ENCODE measurements at regions of chr11 and their contacts with region 1.

Region 1: DNA sequence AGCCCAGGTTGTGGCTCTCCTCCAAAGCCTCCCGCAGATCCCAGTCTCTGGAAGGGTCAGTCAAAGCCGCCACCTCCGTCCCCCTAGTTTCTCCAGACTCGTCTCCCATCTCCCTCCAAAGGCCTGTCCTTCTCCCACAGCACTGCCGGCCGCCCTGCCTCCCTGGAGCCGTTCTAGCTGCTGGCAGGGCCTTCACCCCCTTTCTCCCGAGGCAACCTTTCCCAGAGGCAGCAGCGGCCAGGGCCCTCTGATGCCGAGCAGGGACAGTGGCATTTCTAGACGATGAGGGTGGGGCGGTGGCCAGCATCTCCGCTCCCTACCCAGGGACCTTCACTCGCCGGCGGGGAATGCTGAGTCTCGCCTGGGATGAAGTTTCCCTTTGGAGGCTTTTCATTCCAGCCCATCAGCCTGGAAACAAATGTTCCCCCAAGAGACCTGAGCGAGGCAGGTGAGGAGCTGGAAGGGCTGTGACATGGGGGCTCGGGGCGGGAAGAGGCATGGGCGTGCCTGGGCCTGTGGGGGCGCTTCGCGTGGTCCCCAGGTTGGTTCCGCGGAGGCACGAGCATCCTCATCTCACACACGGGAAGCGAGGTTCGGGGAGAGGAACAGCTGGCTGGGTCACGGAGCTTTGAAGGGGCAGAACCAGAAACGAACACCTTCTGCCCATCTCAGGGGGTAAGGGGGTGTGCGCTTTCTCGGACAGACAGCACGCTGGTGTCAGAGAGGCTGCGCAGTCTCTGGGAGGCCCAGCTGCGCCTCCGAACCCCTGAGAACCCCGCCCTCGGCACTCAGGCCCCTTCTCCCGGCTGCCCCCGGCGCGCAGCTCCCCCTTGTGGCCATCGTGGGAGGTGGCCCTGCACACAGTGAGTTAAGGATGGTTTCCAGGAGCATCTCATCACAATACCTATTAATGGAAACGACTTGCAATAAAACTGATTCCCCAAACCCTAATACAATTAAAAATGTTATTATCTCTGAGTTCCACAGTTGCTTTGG is 18.1 kb upstream of the KLHL35 start:
- DNase-seq: peak; percentile 59
- H3K4me3 Mint-ChIP-seq: no peak overlapping the region
- H3K27ac Mint-ChIP-seq: no peak overlapping the region
- H3K4me1 Mint-ChIP-seq: no peaks in the 10 kb centered on the region
- H3K27me3 Mint-ChIP-seq: no peaks in the 10 kb centered on the region

Region 2: GRCh38 chr11:75462117-75462812 is 11.1 kb after region 1 on chr11:
- CTCF ChIA-PET with region 1: interaction called, 10 read pairs
- POLR2A ChIA-PET with region 1: no interaction called
- intact Hi-C with region 1: no loop called
- DNase-seq: no peak
- H3K4me3 Mint-ChIP-seq: no peak overlapping the region
- H3K27ac Mint-ChIP-seq: no peak overlapping the region
- H3K4me1 Mint-ChIP-seq: no peaks in the 10 kb centered on the region
- H3K27me3 Mint-ChIP-seq: no peaks in the 10 kb centered on the region